Ovary (tissue), 10 donors: ENCODE measurements at regions of chr16 and their contacts with region 1.

Region 1: DNA sequence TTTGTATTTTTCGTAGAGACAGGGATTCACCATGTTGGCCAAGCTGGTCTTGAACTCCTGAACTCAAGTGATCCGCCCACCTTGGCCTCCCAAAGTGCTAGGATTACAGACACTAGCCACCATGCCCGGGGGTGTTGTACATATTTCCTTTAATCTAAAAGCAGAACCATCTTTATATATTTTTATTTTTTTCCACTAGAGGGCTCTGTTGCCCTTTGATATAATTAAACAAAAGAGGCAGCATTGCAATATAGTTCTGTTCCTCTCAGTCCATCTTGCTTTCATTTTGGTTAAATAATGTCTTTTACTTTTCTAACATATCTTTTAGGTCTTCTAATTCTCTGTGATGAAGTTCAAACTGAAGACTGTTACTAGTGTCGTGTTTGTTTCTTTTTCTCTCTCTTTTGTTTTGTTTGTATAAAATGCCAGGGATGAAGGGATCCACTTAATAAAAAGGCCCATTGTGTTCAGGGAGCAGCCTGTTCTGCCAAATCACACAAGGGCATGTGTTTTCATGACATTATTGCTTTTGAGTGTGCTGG is 23.4 kb downstream of the WWOX start:
- DNase-seq: peak in 2 of 5 donors; percentile 26 to 33
- H3K4me3 ChIP-seq: no peak overlapping the region
- H3K27ac ChIP-seq: peak overlapping the region in 1 of 2 donors; percentile 46
- H3K4me1 ChIP-seq: peaks cover 8% of the 10 kb centered on the region
- H3K27me3 ChIP-seq: no peaks in the 10 kb centered on the region
- CTCF ChIP-seq: peak; percentile 13 to 61 (median 36)
- EP300 ChIP-seq: no peak
- POLR2A ChIP-seq: no peak

Region 2: DNA sequence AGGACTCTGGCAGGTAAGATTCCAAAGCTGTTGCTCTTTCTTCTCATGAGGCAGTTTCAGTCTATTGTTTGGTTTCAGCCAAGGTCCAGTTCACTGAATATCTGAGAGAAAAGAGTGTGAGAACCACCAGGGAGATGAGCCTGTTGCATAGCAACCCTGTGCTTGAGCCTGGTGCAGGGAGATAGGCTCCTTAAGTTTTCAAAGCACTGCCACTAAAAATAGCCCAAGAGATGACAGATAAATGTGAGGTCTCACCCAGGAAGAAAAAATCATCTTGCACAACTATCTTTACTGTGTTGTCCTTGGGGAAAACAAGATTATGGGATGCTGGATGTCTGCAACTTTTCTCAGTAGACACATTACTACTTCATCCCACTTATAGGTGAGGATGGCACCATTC is 426.7 kb before region 1 on chr16:
- intact Hi-C with region 1: no loop called
- DNase-seq: no peak
- H3K4me3 ChIP-seq: no peak overlapping the region
- H3K27ac ChIP-seq: no peak overlapping the region
- H3K4me1 ChIP-seq: no peaks in the 10 kb centered on the region
- H3K27me3 ChIP-seq: no peaks in the 10 kb centered on the region
- CTCF ChIP-seq: no peak
- EP300 ChIP-seq: no peak
- POLR2A ChIP-seq: no peak

Region 3: GRCh38 chr16:78184238-78185183 is 61.7 kb after region 1 on chr16:
- intact Hi-C with region 1: no loop called
- DNase-seq: no peak
- H3K4me3 ChIP-seq: no peak overlapping the region
- H3K27ac ChIP-seq: no peak overlapping the region
- H3K4me1 ChIP-seq: peaks cover 5% of the 10 kb centered on the region
- H3K27me3 ChIP-seq: no peaks in the 10 kb centered on the region
- CTCF ChIP-seq: no peak
- EP300 ChIP-seq: no peak
- POLR2A ChIP-seq: no peak

Region 4: GRCh38 chr16:78235168-78235800 is 112.4 kb after region 1 on chr16:
- intact Hi-C with region 1: loop called in 1 of 4 experiments (anchors 10 kb)
- DNase-seq: peak in 4 of 5 donors; percentile 30 to 63 (median 54)
- H3K4me3 ChIP-seq: no peak overlapping the region
- H3K27ac ChIP-seq: no peak overlapping the region
- H3K4me1 ChIP-seq: peaks cover 11% of the 10 kb centered on the region
- H3K27me3 ChIP-seq: no peaks in the 10 kb centered on the region
- CTCF ChIP-seq: peak; percentile 22 to 38 (median 27)
- EP300 ChIP-seq: no peak
- POLR2A ChIP-seq: no peak